Right lobe of liver (tissue), 6 donors: ENCODE measurements at regions of chr9 and their contacts with region 1.

Region 1: DNA sequence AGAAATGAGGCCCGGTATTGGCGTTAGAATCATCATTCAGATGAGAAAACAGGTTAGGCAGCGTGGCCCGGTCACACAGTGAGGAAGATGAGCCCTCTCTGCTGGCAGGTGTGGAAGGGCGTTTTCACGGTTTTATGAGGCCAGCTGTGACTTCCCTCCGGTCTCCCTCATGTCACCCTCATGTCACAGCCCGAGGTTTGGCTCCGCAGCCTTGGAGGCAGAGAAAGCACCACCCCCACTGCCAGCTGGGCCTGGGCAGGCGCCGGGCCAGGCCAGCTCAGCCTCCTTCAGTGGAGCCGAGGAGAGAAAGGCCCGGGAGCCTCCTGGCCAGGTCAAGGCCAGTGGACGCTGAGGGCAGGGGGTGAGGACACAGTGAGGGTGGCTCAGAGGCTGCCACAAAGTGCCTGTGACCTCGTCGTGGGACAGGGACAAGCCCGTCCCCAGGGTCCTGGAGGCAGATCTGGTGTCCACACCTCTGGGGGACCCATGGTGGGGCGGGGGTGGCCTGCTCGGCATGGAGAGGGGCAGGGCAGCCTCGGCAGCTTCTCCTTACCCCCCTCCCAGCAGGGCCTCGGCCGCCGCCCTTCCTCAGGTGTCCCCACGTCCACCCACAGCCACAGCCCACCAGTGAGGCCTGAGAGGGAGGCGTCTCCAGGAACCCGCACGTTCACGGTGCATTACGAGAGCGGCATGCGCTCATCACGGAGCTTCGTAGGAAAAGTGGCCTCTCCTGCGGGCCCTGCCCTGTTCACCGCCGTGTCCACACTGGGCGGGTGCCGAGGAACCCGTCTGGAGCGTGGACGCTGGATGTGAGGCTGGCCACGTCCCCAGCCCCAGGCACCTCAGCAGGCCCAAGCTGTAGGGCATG is 32.2 kb downstream of the EXD3 start:
- DNase-seq: peak in 1 of 3 donors; percentile 48
- ATAC-seq: peak in 1 of 4 donors; percentile 11
- H3K4me3 ChIP-seq: no peak overlapping the region
- H3K27ac ChIP-seq: no peak overlapping the region
- H3K4me1 ChIP-seq: no peaks in the 10 kb centered on the region
- H3K27me3 ChIP-seq: no peaks in the 10 kb centered on the region
- CTCF ChIP-seq: no peak
- POLR2A ChIP-seq: no peak

Region 2: DNA sequence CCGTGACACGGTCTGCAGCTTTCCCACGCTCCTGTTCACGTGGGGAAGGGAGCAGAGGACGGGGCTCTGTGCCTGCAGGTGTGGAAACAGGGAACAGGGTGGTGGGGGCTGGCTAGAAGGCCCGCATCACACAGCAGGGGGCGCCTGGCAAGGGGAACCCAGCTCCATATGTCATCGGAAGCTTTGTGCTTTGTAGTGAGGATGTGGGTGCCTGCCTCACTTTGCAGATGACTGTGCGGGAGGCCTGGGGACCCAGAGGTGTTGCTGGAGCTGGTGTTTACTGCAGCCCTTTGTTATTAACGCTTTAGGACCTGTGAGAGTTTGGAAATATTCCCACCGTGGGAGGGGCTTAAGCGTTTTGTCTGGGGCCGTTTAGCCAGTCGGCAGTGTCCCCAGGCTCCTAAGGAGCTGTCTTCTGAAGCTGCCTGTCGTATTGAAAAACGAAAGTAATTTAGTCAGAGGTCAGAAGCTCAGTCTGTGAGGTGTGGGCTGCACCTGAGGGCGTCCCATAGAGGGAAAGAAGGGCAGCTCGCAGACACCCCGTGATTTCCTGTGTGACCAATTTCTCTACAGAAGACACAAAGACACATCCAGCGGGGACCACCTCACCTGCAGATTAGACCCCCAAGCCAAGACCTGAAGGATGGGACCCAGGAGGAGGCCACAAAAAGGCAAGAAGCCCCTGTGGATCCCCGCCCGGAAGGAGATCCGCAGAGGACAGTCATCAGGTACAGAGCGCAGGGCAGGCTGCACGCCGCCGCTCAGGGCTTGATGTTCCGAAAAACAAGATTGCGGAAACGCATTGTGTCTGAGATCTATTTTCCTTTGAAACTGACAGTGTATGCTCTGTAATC is 294.9 kb before region 1 on chr9:
- intact Hi-C with region 1: loop called in 1 of 2 experiments (anchors 10 kb)
- DNase-seq: no peak
- ATAC-seq: peak; percentile 45 to 51 (median 48)
- H3K4me3 ChIP-seq: no peak overlapping the region
- H3K27ac ChIP-seq: no peak overlapping the region
- H3K4me1 ChIP-seq: no peaks in the 10 kb centered on the region
- H3K27me3 ChIP-seq: no peaks in the 10 kb centered on the region
- CTCF ChIP-seq: peak in 3 of 4 donors; percentile 8 to 16 (median 13)
- POLR2A ChIP-seq: no peak

Region 3: GRCh38 chr9:137302176-137302994 is 88.4 kb before region 1 on chr9 and contains the start of gene NRARP:
- intact Hi-C with region 1: no loop called
- DNase-seq: peak; percentile 80 to 92 (median 86)
- ATAC-seq: peak; percentile 53 to 69 (median 55)
- H3K4me3 ChIP-seq: peak within 1 kb of the TSS; percentile 31 to 44 (median 39)
- H3K27ac ChIP-seq: peak within 1 kb of the TSS; percentile 26 to 78 (median 47)
- H3K4me1 ChIP-seq: peaks cover 0 to 20% (median under 1%) of the 10 kb centered on the region in 4 donors
- H3K27me3 ChIP-seq: peaks cover 0 to 20% of the 10 kb centered on the region in 2 donors
- CTCF ChIP-seq: peak in 3 of 4 donors; percentile 23 to 45 (median 40)
- POLR2A ChIP-seq: peak; percentile 46
- total RNA-seq, gene NRARP: 0.57 to 2.3 (median 0.98) TPM